PC-3 (cell line): ENCODE measurements at regions of chr6 and their contacts with region 1.

Region 1: DNA sequence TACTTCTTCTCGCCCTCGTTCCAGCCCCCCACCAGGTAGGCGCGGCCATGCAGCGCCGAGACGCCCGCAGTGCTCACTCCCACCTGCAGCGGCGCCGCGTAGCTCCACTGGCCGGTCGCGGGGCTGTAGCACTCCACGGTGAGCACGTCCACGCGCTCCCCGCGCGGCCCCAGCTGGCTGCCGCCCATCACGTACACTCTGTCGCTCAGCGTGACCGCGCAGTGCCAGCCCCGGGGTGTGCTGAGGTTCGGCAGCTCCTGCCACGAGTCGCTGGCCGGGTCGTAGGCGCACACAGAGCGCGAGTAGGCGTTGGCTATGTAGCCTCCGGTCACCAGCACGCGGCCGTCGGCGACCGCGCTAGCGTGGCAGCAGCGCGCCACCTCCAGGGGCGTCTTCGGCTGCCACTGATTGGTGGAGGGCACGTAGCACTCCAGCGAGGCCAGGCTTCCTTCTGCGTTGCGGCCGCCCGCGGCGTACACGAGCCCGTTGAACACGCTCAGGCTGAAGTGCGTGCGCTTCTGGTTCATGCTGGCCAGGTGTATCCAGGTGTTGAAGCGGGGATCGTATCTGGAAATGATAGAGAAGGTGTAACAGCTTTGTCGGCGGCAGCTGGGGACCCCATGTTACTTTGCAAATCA is 13.7 kb downstream of the KLHL31 start:
- DNase-seq: peak; percentile 93
- ATAC-seq: peak; percentile 92
- H3K4me3 ChIP-seq: peak overlapping the region; percentile 82
- H3K27ac ChIP-seq: peak overlapping the region; percentile 75
- H3K4me1 ChIP-seq: peaks cover 42% of the 10 kb centered on the region
- H3K27me3 ChIP-seq: no peaks in the 10 kb centered on the region
- CTCF ChIP-seq: 0 out of 2 replicates have a peak, but pooled peaks have one; percentile 22

Region 2: DNA sequence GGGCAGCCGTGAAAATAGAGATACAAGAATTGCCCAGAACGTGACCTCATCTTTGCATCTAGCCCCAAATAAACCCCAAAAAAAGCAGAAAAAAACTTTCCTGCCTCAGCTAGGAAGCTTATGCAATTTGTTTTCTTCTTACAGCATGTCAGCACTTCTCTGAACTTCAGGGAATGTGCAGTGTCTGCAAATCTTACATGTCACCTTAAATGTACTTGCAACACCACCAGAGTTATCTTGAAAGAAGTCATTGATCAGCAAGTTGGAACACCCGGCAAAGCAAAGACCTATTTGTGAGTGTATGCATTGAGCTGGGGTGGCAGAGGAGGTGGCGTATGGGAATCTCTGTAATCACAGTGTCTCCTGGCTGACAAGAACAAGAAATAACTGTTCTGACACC is 1687.9 kb before region 1 on chr6:
- CTCF ChIA-PET with region 1: no interaction called
- POLR2A ChIA-PET with region 1: no interaction called
- intact Hi-C with region 1: no loop called
- DNase-seq: no peak
- ATAC-seq: no peak
- H3K4me3 ChIP-seq: no peak overlapping the region
- H3K27ac ChIP-seq: no peak overlapping the region
- H3K4me1 ChIP-seq: 0 out of 2 replicates have a peak, but pooled peaks cover 3% of the 10 kb centered on the region
- H3K27me3 ChIP-seq: no peaks in the 10 kb centered on the region
- CTCF ChIP-seq: no peak

Region 3: DNA sequence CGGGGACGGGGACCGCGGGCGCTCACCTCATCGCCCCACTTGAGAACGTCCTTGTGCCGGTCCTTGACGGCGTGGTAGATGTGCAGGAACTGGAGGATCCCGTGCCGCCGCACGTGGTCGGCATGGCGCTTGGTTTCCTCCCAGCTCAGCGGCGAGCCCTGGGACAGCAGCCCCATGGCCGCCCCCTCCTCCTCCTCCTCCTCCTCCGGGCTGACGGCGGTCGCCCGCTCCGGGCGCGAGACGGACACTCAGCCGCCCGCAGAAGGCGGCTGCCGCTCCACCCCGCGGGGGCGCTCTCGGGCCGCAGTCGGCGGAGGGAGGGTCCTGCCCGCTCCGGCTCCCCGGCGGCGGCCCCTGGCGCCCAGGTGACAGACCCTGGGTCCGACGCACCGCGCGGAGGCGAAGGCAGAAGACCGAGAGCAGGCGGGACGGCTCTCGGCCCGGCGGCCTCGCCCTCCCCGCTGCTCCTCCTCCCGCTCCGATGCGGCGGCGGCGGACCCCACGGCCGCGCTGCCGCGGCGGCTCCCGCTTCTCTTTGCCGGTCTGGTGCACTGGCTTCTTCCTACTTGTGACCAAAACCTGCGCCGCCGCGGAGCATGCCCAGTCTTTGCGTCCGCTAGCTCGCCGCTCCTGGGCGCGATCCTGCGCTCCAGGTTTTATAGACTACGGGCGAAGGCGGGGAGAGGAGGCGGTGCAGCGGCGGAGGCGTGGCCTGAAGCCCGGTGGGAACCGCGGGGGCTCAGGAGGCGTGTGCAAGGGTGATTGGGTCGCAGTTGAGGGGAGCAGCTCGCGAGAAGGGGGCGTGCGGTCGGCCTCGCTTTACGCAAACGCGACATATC is 107.2 kb before region 1 on chr6 and contains the start of gene GCLC:
- CTCF ChIA-PET with region 1: interaction called, 11 read pairs
- POLR2A ChIA-PET with region 1: interaction called, 3 read pairs
- intact Hi-C with region 1: loop called (anchors 1 kb)
- DNase-seq: peak; percentile 96
- ATAC-seq: peak; percentile 55
- H3K4me3 ChIP-seq: peak within 1 kb of the TSS; percentile 92
- H3K27ac ChIP-seq: peak within 1 kb of the TSS; percentile 56
- H3K4me1 ChIP-seq: peaks cover 42% of the 10 kb centered on the region
- H3K27me3 ChIP-seq: no peaks in the 10 kb centered on the region
- CTCF ChIP-seq: peak; percentile 65
- total RNA-seq, gene GCLC: 50.1 and 54.7 TPM in 2 replicates

Region 4: GRCh38 chr6:53673162-53673683 is 21.3 kb after region 1 on chr6:
- CTCF ChIA-PET with region 1: no interaction called
- POLR2A ChIA-PET with region 1: no interaction called
- intact Hi-C with region 1: loop called (anchors 1 kb)
- DNase-seq: peak; percentile 98
- ATAC-seq: peak; percentile 66
- H3K4me3 ChIP-seq: peak overlapping the region; percentile 28; the same call in 1 of the 2 replicates
- H3K27ac ChIP-seq: peak overlapping the region; percentile 52
- H3K4me1 ChIP-seq: peaks cover 22% of the 10 kb centered on the region
- H3K27me3 ChIP-seq: no peaks in the 10 kb centered on the region
- CTCF ChIP-seq: no peak

Region 5: DNA sequence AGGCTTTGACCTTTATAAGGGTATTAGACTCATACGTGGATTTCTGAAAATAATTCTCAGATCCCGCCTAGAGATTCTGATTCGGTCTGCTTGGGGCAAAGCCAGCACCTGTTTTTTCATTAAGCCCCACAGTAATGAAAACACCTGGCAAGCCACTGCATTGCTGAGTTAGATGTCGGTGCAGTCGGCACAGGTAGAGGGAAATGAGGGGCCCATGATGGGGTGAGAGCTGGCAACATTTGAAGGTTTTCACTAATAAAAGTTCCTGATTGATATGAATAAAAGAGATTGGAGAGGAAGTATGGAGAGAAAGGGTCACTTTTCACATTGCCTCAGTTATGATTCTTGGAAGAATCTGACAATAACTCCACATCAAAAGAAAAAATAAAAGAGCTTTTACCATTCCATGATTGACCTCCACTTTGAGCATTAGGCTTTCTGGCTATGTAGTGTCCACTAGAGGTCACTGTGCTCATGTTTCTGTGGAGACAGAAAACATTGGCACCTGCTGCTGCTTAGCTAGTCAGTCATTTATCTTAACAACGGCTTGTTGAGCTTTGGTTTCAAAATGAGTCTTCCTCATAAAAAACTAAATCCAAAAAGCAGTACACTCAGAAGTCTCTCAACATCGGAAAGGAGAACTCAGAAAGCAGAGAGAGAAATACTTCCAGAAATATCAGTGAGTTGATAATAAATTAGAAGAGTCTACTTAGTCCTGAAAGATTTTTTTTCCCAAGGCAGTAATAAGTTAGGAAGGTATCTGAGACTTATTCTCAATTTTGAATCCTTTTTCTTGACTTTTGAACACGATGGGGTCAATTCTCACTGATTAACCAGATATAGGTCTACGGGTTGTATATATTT is 66.9 kb after region 1 on chr6:
- CTCF ChIA-PET with region 1: interaction called, 5 read pairs
- POLR2A ChIA-PET with region 1: interaction called, 4 read pairs
- intact Hi-C with region 1: loop called (anchors 2 kb)
- DNase-seq: peak; percentile 88
- ATAC-seq: peak; percentile 93
- H3K4me3 ChIP-seq: no peak overlapping the region
- H3K27ac ChIP-seq: no peak overlapping the region
- H3K4me1 ChIP-seq: peaks cover 15% of the 10 kb centered on the region
- H3K27me3 ChIP-seq: no peaks in the 10 kb centered on the region
- CTCF ChIP-seq: peak; percentile 94

Region 6: DNA sequence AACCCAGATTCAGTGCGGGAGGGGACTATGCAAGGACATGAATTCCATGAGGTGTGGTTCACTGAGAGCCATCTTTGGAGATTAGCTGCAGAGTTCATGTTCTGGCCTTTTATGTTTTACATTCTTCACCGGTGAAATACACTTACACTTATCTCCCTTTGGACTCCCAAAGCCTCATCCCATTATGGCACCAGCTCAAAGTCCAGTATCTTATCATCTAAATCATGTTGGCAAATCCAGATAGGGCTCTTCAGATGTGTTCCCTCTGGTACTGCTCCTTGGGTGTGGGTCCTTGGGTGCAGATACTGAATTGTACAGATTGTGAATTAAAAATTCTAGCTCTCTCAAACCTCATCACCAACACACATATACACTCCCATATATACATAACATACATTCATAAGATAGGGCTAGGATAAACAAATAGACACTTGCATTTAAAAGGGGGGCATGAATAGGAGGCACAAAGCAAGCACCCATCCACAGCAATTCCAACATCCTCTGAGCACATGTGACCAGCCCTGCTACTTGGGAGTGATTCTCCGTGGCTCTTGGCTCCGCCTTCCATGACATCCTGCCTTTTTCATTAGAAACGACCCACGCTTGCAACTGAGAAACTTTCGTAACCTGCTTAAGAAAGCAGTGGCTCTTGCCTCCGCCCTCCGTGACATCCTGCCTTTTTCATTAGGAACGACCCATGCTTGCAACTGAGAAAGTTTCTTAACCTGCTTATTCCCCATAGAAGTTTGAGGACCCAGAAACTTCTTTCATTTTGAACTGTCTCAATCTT is 89.3 kb after region 1 on chr6:
- CTCF ChIA-PET with region 1: no interaction called
- POLR2A ChIA-PET with region 1: no interaction called
- intact Hi-C with region 1: no loop called
- DNase-seq: no peak
- ATAC-seq: no peak
- H3K4me3 ChIP-seq: no peak overlapping the region
- H3K27ac ChIP-seq: no peak overlapping the region
- H3K4me1 ChIP-seq: peaks cover 18% of the 10 kb centered on the region
- H3K27me3 ChIP-seq: no peaks in the 10 kb centered on the region
- CTCF ChIP-seq: no peak

Region 7: GRCh38 chr6:53752856-53753255 is 101.0 kb after region 1 on chr6:
- CTCF ChIA-PET with region 1: no interaction called
- POLR2A ChIA-PET with region 1: no interaction called
- intact Hi-C with region 1: no loop called
- DNase-seq: peak; percentile 83
- ATAC-seq: peak; percentile 95
- H3K4me3 ChIP-seq: peak overlapping the region; percentile 14; the same call in 1 of the 2 replicates
- H3K27ac ChIP-seq: peak overlapping the region; percentile 43
- H3K4me1 ChIP-seq: peaks cover 22% of the 10 kb centered on the region
- H3K27me3 ChIP-seq: no peaks in the 10 kb centered on the region
- CTCF ChIP-seq: no peak

Region 8: GRCh38 chr6:53879608-53880007 is 227.7 kb after region 1 on chr6:
- CTCF ChIA-PET with region 1: no interaction called
- POLR2A ChIA-PET with region 1: no interaction called
- intact Hi-C with region 1: no loop called
- DNase-seq: no peak
- ATAC-seq: no peak
- H3K4me3 ChIP-seq: no peak overlapping the region
- H3K27ac ChIP-seq: no peak overlapping the region
- H3K4me1 ChIP-seq: no peaks in the 10 kb centered on the region
- H3K27me3 ChIP-seq: no peaks in the 10 kb centered on the region
- CTCF ChIP-seq: no peak